PC-9 (cell line): ENCODE measurements at regions of chr10 and their contacts with region 1.

Region 1: DNA sequence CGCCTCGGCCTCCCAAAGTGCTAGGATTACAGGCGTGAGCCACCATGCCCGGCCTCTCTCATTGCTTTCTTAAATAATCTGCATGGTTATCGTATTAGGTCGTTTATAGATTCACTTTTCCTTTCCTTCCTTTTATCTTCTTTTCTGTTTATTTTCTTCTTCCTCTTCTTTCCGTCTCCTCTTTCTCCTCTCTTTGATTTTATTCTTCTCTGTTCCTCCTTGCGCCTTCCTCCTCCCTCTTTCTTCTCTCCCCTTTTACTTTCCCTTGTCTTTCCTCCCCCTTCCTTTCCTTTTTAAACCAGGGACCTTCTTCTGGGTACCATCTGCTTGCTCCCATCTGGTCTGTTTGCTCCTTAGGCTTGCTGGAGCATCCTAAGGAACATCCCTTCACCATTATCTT is 18.6 kb downstream of the MLLT10 start:
- DNase-seq: no peak
- H3K4me3 ChIP-seq: no peak overlapping the region
- H3K27ac ChIP-seq: no peak overlapping the region
- H3K4me1 ChIP-seq: peaks cover 7% of the 10 kb centered on the region
- H3K27me3 ChIP-seq: no peaks in the 10 kb centered on the region
- CTCF ChIP-seq: no peak

Region 2: DNA sequence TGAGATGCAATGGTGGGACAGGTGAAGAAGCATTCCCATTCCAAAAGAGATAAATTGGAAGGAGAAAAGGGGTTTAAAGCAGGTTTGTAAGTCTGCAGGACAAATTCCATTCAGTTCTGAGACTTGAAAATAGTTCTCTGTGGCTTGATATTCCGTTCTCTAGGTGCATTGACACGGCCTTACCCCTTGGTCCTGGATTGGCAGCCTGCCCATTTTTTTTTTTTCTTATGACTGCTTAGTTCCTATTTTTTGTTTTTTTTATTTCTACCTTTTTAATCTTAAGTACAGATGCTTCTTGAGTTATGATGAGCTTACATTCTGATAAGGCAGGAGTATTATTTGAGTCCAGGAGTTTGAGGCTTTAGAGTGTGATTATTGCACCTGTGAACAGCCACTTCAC is 52.0 kb after region 1 on chr10:
- CTCF ChIA-PET with region 1: no interaction called
- POLR2A ChIA-PET with region 1: interaction called, 30 read pairs
- intact Hi-C with region 1: no loop called
- DNase-seq: no peak
- H3K4me3 ChIP-seq: no peak overlapping the region
- H3K27ac ChIP-seq: no peak overlapping the region
- H3K4me1 ChIP-seq: no peaks in the 10 kb centered on the region
- H3K27me3 ChIP-seq: no peaks in the 10 kb centered on the region
- CTCF ChIP-seq: no peak